Naive thymus-derived CD4-positive, alpha-beta T cell (primary cell): ENCODE measurements at regions of chr3 and their contacts with region 1.

Region 1: DNA sequence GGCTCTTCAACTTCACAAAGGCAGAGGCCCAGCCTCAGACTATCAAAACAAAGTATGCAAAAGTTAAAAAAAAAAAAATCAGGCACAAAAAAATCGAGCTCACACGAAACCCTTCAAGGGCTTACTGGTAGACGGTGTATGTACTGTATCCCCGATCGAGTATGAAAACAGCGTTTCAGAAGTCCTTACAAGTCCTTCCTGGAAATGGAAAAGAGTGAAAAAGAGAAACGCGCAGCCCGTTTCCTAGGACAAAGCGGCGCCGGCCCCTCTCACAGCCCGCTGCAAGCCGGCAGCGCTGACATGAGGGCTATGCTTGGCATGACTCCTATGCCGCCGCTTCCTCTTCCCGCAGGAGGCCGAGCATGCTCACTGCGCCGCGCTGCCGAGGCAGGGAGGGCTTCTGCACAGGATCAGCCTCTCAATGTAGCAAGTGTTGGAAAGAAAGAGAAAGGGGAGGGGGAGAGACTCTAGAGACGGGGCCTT is at the start of gene VGLL4:
- DNase-seq: peak; percentile 42 to 71 (median 58)
- ATAC-seq: peak; percentile 72
- H3K4me3 ChIP-seq: peak within 1 kb of the TSS; percentile 98
- H3K4me3 Mint-ChIP-seq: peak within 1 kb of the TSS; percentile 90 to 100 (median 98)
- H3K27ac ChIP-seq: peak within 1 kb of the TSS; percentile 91
- H3K27ac Mint-ChIP-seq: peak within 1 kb of the TSS; percentile 94 to 100 (median 99)
- H3K4me1 ChIP-seq: peaks cover 12 to 23% of the 10 kb centered on the region in 2 donors
- H3K4me1 Mint-ChIP-seq: peaks cover 22 to 43% (median 37%) of the 10 kb centered on the region in 7 donors
- H3K27me3 ChIP-seq: no peaks in the 10 kb centered on the region
- H3K27me3 Mint-ChIP-seq: peaks cover 0 to 17% (median 0%) of the 10 kb centered on the region in 5 donors
- total RNA-seq, gene VGLL4: 22.9 to 44.8 (median 36.2) TPM

Region 2: GRCh38 chr3:9826815-9827567 is 1816.7 kb before region 1 on chr3:
- CTCF ChIA-PET with region 1: no interaction called
- POLR2A ChIA-PET with region 1: no interaction called
- intact Hi-C with region 1: no loop called
- DNase-seq: peak in 3 of 9 donors; percentile 21 to 28 (median 25)
- ATAC-seq: peak; percentile 29
- H3K4me3 ChIP-seq: no peak overlapping the region
- H3K4me3 Mint-ChIP-seq: no peak overlapping the region
- H3K27ac ChIP-seq: no peak overlapping the region
- H3K27ac Mint-ChIP-seq: no peak overlapping the region
- H3K4me1 ChIP-seq: no peaks in the 10 kb centered on the region
- H3K4me1 Mint-ChIP-seq: peaks cover 6 to 8% (median 7%) of the 10 kb centered on the region in 7 donors
- H3K27me3 ChIP-seq: no peaks in the 10 kb centered on the region
- H3K27me3 Mint-ChIP-seq: no peaks in the 10 kb centered on the region

Region 3: GRCh38 chr3:11568503-11569155 is 75.0 kb before region 1 on chr3:
- CTCF ChIA-PET with region 1: interaction called, 3 read pairs
- POLR2A ChIA-PET with region 1: no interaction called
- intact Hi-C with region 1: loop called in 1 of 2 experiments (anchors 5 kb)
- DNase-seq: no peak
- ATAC-seq: no peak
- H3K4me3 ChIP-seq: no peak overlapping the region
- H3K4me3 Mint-ChIP-seq: no peak overlapping the region
- H3K27ac ChIP-seq: no peak overlapping the region
- H3K27ac Mint-ChIP-seq: peak overlapping the region in 4 of 9 donors; percentile 35 to 72 (median 49)
- H3K4me1 ChIP-seq: no peaks in the 10 kb centered on the region
- H3K4me1 Mint-ChIP-seq: peaks cover 3 to 30% (median 18%) of the 10 kb centered on the region in 7 donors
- H3K27me3 ChIP-seq: no peaks in the 10 kb centered on the region
- H3K27me3 Mint-ChIP-seq: no peaks in the 10 kb centered on the region

Region 4: DNA sequence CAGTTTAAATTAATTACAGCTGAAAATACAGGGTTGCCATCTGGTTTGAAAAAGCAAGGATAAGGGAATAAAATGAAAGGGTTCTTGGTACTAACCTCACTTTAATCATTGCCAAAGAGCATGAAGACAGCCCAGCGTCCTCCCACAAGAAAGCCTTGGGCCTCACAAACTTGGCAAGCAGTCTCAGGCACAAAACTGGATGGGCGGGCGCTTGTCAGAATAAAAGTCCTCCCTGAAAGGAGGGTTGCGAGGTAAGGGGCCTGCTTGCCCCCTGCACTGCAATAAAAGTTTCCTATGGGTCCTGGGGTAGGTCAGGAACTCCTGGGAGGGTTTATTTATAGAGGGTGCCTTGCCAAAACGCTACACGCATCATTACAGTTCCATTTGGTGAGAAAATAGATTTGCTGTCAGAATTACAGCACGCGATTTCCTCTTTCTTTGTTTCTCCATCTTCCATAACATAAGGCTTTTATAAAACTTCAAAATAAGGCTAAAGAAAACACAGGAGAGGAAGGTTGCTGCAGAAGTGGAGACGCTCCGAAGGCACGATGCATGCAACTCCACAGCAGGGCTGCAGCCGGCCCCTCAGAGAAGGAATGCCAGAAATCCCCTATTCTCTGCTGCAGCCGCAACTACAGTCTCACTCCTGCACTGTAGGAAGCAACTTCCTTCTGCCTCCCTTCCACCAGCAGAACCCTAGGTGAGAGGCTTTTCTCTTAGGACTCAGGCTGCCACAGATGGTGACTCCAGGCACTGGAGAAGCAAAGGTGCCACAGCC is 61.3 kb before region 1 on chr3:
- CTCF ChIA-PET with region 1: no interaction called
- POLR2A ChIA-PET with region 1: no interaction called
- intact Hi-C with region 1: loop called (anchors 1 kb)
- DNase-seq: peak in 6 of 9 donors; percentile 8 to 24 (median 17)
- ATAC-seq: peak; percentile 67
- H3K4me3 ChIP-seq: peak overlapping the region; percentile 28
- H3K4me3 Mint-ChIP-seq: peak overlapping the region; percentile 61 to 94 (median 83)
- H3K27ac ChIP-seq: peak overlapping the region; percentile 5
- H3K27ac Mint-ChIP-seq: peak overlapping the region; percentile 12 to 87 (median 79)
- H3K4me1 ChIP-seq: peaks cover 0 to 15% of the 10 kb centered on the region in 2 donors
- H3K4me1 Mint-ChIP-seq: peaks cover 28 to 86% (median 81%) of the 10 kb centered on the region in 7 donors
- H3K27me3 ChIP-seq: no peaks in the 10 kb centered on the region
- H3K27me3 Mint-ChIP-seq: no peaks in the 10 kb centered on the region

Region 5: DNA sequence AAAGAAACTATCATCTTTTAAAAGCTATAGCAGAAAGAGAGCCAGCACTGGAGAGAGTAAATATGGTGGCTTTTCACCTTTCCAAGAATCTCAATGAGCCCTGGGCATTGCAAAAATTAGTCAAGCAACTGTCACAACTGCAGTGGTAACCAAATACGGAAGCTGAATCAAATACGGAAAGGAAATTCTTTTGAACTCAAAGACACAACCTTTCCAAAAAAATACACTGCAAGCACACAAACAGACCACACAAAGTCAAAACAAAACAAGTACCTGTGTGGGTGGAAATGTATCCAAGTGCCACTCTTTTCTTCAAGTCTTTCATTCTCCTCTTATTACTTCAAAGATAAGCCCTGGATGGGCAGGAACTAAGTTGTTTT is 17.6 kb before region 1 on chr3:
- CTCF ChIA-PET with region 1: interaction called, 8 read pairs
- POLR2A ChIA-PET with region 1: interaction called, 53 read pairs
- intact Hi-C with region 1: loop called (anchors 1 kb)
- DNase-seq: peak in 2 of 9 donors; percentile 16 to 30
- ATAC-seq: peak; percentile 34
- H3K4me3 ChIP-seq: no peak overlapping the region
- H3K4me3 Mint-ChIP-seq: peak overlapping the region in 9 of 10 donors; percentile 14 to 86 (median 73)
- H3K27ac ChIP-seq: no peak overlapping the region
- H3K27ac Mint-ChIP-seq: peak overlapping the region in 7 of 9 donors; percentile 14 to 97 (median 90)
- H3K4me1 ChIP-seq: peaks cover 18 to 38% of the 10 kb centered on the region in 2 donors
- H3K4me1 Mint-ChIP-seq: peaks cover 36 to 87% (median 77%) of the 10 kb centered on the region in 7 donors
- H3K27me3 ChIP-seq: no peaks in the 10 kb centered on the region
- H3K27me3 Mint-ChIP-seq: no peaks in the 10 kb centered on the region

Region 6: GRCh38 chr3:11719406-11720230 is 76.0 kb after region 1 on chr3:
- CTCF ChIA-PET with region 1: interaction called, 3 read pairs
- POLR2A ChIA-PET with region 1: no interaction called
- intact Hi-C with region 1: loop called (anchors 1 to 5 kb)
- DNase-seq: peak; percentile 58 to 77 (median 67)
- ATAC-seq: peak; percentile 86
- H3K4me3 ChIP-seq: peak overlapping the region; percentile 74
- H3K4me3 Mint-ChIP-seq: peak overlapping the region; percentile 59 to 95 (median 82)
- H3K27ac ChIP-seq: peak overlapping the region; percentile 75
- H3K27ac Mint-ChIP-seq: peak overlapping the region in 1 of 9 donors; percentile 62
- H3K4me1 ChIP-seq: peaks cover 6 to 8% of the 10 kb centered on the region in 2 donors
- H3K4me1 Mint-ChIP-seq: peaks cover 14 to 30% (median 20%) of the 10 kb centered on the region in 7 donors
- H3K27me3 ChIP-seq: no peaks in the 10 kb centered on the region
- H3K27me3 Mint-ChIP-seq: peaks cover 2 to 34% (median 10%) of the 10 kb centered on the region in 5 donors

Region 7: GRCh38 chr3:11770477-11771391 is 127.1 kb after region 1 on chr3:
- CTCF ChIA-PET with region 1: no interaction called
- POLR2A ChIA-PET with region 1: no interaction called
- intact Hi-C with region 1: loop called (anchors 1 to 2 kb)
- DNase-seq: peak; percentile 31 to 91 (median 86)
- ATAC-seq: peak; percentile 100
- H3K4me3 ChIP-seq: peak overlapping the region; percentile 12
- H3K4me3 Mint-ChIP-seq: peak overlapping the region; percentile 22 to 79 (median 62)
- H3K27ac ChIP-seq: peak overlapping the region; percentile 56
- H3K27ac Mint-ChIP-seq: peak overlapping the region; percentile 58 to 90 (median 70)
- H3K4me1 ChIP-seq: peaks cover 15% of the 10 kb centered on the region in 2 donors
- H3K4me1 Mint-ChIP-seq: peaks cover 11 to 30% (median 24%) of the 10 kb centered on the region in 7 donors
- H3K27me3 ChIP-seq: no peaks in the 10 kb centered on the region
- H3K27me3 Mint-ChIP-seq: no peaks in the 10 kb centered on the region